Psoas muscle (tissue), 8 donors: ENCODE measurements at regions of chr1 and their contacts with region 1.

Region 1: DNA sequence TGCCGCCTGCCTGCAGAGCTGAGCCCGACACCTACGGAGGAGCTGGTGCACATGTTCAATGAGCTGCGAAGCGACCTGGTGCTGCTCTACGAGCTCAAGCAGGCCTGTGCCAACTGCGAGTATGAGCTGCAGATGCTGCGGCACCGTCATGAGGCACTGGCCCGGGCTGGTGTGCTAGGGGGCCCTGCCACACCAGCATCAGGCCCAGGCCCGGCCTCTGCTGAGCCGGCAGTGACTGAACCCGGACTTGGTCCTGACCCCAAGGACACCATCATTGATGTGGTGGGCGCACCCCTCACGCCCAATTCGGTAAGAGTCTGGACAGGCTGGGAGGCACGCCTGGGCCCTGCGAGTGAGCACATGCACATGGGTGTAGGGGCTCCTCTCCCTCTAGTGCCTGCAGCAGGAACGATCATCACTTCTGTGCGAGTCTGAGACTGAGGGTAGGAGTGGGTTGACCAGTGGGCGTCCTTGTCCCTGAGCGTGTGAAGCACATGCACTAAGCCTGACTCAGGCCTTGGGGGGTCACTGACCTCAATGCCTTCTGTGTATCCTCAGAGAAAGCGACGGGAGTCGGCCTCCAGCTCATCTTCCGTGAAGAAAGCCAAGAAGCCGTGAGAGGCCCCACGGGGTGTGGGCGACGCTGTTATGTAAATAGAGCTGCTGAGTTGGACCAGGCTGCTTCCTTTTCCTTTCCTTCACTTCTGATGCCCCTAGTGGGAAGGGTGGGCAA is 6.9 kb downstream of the DMAP1 start:
- DNase-seq: no peak
- ATAC-seq: no peak
- H3K4me3 ChIP-seq: no peak overlapping the region
- H3K27ac ChIP-seq: no peak overlapping the region
- H3K4me1 ChIP-seq: no peaks in the 10 kb centered on the region
- H3K27me3 ChIP-seq: no peaks in the 10 kb centered on the region
- CTCF ChIP-seq: no peak

Region 2: DNA sequence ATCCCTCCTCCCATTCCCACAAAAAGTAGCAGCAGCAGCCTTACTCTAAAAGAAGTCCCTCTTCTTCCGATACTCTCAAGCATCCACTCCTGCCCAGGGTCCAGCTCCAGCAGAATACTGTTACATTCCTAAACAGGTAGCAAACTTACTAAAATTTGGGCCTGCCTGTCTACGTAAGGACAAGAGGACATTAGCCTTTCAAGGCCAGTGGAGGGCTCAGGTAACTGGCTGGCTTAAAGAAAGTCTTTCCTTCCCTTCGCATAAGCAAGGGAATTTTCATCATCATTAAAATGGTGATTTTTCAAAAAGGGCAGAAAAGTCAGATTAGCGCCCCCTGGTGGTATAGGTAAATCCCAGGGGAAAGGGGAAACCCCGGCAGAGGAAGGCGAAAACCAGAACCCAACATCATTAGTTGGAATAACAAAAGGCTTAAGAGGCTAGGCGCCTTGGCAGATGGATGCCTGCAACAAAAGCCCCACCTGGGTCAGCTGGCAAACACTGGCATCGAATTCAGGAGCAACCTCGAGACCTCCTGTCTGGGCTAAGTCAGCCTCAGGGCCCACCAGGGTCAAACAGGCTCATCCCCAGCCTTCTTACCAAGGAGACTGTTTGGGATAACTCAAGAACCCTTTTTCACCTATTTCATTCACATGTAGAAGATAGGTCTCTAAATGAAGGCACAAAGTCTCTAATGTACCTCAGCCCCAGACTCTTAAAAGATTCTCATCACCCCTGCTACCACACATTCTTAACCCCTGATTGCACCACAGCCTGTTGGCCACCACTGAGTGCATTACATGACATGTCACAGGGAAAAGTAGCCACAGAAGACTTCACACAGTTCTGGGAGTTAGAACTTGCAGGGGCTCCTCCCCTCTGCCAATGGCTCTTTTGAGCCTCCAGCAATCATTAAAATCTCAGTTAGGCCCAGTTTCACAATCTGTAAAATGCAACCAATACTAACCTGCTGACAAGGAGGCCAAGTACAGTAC is 98.2 kb after region 1 on chr1:
- intact Hi-C with region 1: loop called (anchors 2 to 5 kb)
- DNase-seq: no peak
- ATAC-seq: peak in 1 of 4 donors; percentile 45
- H3K4me3 ChIP-seq: no peak overlapping the region
- H3K27ac ChIP-seq: no peak overlapping the region
- H3K4me1 ChIP-seq: peaks cover 8% of the 10 kb centered on the region
- H3K27me3 ChIP-seq: no peaks in the 10 kb centered on the region
- CTCF ChIP-seq: peak; percentile 76

Region 3: GRCh38 chr1:44368471-44369151 is 148.4 kb after region 1 on chr1:
- intact Hi-C with region 1: no loop called
- DNase-seq: no peak
- ATAC-seq: no peak
- H3K4me3 ChIP-seq: no peak overlapping the region
- H3K27ac ChIP-seq: no peak overlapping the region
- H3K4me1 ChIP-seq: no peaks in the 10 kb centered on the region
- H3K27me3 ChIP-seq: no peaks in the 10 kb centered on the region
- CTCF ChIP-seq: no peak